ENCODE measurements at regions of chr17 and their contacts with region 1.

Region 1: DNA sequence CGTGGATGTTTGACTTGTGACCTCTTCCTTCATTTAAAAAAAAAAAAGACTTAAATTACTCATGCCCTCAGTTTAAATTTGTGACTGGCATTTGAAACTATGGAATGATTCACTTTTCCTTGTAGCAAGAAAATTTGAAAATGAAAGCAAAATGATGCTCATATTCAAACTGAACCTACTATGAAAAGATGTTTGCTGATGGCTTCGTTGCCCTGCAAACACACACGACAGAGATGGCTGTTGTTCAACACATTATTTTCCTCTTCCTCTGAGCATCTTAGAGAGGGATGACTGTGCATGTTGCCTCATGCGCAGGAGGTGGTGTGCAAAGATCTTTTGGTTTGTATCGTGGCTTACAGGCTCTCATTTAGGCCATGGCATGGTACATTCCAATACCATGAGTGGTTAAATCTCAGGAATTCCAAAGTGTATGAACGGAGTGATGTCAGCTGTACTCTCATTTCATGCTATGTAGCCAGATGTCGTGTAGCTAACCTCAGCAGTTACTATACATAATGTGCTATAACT is 164.5 kb downstream of the PRKCA start:
- DNase-seq: peak; percentile 55
- H3K4me3 Mint-ChIP-seq: peak overlapping the region; percentile 63
- H3K27ac Mint-ChIP-seq: peak overlapping the region; percentile 95
- H3K4me1 Mint-ChIP-seq: peaks cover 79% of the 10 kb centered on the region
- H3K27me3 Mint-ChIP-seq: no peaks in the 10 kb centered on the region

Region 2: DNA sequence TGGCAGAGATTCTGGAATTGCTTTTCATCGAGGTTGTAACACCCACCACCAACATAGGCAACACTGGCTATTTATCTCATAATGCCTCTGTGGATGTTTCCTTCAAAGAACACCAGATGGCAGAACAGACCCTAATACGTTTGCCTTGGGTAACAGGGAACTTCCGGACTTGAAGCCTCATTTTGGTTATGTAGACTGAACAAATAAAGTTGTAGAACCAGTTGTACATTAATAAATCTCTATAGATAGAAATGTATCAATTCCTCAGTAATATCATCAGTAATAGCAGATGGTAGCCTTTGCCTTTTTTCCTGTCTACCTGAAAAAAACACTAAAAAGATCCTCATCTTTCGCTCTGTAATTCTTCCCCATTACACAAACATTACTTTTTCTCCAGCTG is 211.8 kb before region 1 on chr17:
- intact Hi-C with region 1: loop called (anchors 1 kb)
- DNase-seq: peak; percentile 26
- H3K4me3 Mint-ChIP-seq: no peak overlapping the region
- H3K27ac Mint-ChIP-seq: peak overlapping the region; percentile 76
- H3K4me1 Mint-ChIP-seq: peaks cover 20% of the 10 kb centered on the region
- H3K27me3 Mint-ChIP-seq: no peaks in the 10 kb centered on the region

Region 3: GRCh38 chr17:66397486-66397885 is 69.4 kb before region 1 on chr17:
- intact Hi-C with region 1: loop called (anchors 1 kb)
- DNase-seq: no peak
- H3K4me3 Mint-ChIP-seq: no peak overlapping the region
- H3K27ac Mint-ChIP-seq: peak overlapping the region; percentile 69
- H3K4me1 Mint-ChIP-seq: peaks cover 80% of the 10 kb centered on the region
- H3K27me3 Mint-ChIP-seq: no peaks in the 10 kb centered on the region

Region 4: GRCh38 chr17:66451188-66452169 is 15.4 kb before region 1 on chr17:
- intact Hi-C with region 1: no loop called
- DNase-seq: no peak
- H3K4me3 Mint-ChIP-seq: no peak overlapping the region
- H3K27ac Mint-ChIP-seq: no peak overlapping the region
- H3K4me1 Mint-ChIP-seq: peaks cover 42% of the 10 kb centered on the region
- H3K27me3 Mint-ChIP-seq: no peaks in the 10 kb centered on the region

Region 5: GRCh38 chr17:66514227-66514806 is 47.4 kb after region 1 on chr17:
- intact Hi-C with region 1: loop called (anchors 1 kb)
- DNase-seq: no peak
- H3K4me3 Mint-ChIP-seq: no peak overlapping the region
- H3K27ac Mint-ChIP-seq: peak overlapping the region; percentile 79
- H3K4me1 Mint-ChIP-seq: peaks cover 86% of the 10 kb centered on the region
- H3K27me3 Mint-ChIP-seq: no peaks in the 10 kb centered on the region

Region 6: DNA sequence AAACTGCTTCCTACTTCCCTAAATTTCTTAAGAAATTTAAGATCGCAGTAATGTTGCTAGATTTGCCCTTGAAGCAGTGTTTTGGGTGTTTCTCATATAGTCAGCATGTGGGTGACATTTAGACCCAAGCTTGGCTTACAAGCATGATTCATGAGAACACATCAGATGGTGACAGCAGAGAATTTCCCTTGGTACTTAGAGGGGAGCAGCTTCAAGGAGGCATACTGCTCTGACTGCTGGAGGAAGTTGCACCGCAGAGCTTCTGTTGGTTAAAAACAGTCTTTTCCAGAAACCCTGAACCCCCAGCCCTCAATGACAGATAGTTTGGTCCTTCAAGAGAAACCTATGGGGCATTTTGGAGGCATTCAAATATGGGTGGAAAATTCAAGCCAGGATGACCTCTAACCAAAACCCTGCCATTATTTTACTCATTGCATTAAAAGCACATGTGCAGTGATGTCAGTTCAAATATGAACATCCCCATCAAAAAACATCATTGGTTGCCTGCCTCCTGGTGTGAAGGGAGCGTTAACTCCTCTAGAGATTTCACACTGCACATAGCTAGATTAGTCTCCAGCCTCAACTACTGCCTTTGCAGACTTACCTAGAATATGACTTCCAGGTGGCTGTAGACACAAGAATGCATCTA is 166.5 kb after region 1 on chr17:
- intact Hi-C with region 1: loop called (anchors 1 kb)
- DNase-seq: peak; percentile 66
- H3K4me3 Mint-ChIP-seq: peak overlapping the region; percentile 41
- H3K27ac Mint-ChIP-seq: peak overlapping the region; percentile 85
- H3K4me1 Mint-ChIP-seq: peaks cover 78% of the 10 kb centered on the region
- H3K27me3 Mint-ChIP-seq: no peaks in the 10 kb centered on the region

Measured in activated T-helper 1 cell treated with anti-CD3 and anti-CD28 coated beads, Interleukin-12 subunit alpha, Interleukin-12 subunit beta, Interleukin-2, Interleukin-4 antibody, amounts not matched to agents 30 ng/mL and 10 ng/mL and 1 ng/mL, durations not matched to agents 14 hours and 24 hours and 36 hours (primary cell).